Calu3 (cell line): ENCODE measurements at regions of chr9 and their contacts with region 1.

Region 1: GRCh38 chr9:18359335-18359734 is 114.6 kb upstream of the ADAMTSL1 start:
- DNase-seq: no peak
- H3K4me3 Mint-ChIP-seq: no peak overlapping the region
- H3K27ac Mint-ChIP-seq: no peak overlapping the region
- H3K4me1 Mint-ChIP-seq: no peaks in the 10 kb centered on the region
- H3K27me3 Mint-ChIP-seq: no peaks in the 10 kb centered on the region
- CTCF ChIP-seq: no peak

Region 2: DNA sequence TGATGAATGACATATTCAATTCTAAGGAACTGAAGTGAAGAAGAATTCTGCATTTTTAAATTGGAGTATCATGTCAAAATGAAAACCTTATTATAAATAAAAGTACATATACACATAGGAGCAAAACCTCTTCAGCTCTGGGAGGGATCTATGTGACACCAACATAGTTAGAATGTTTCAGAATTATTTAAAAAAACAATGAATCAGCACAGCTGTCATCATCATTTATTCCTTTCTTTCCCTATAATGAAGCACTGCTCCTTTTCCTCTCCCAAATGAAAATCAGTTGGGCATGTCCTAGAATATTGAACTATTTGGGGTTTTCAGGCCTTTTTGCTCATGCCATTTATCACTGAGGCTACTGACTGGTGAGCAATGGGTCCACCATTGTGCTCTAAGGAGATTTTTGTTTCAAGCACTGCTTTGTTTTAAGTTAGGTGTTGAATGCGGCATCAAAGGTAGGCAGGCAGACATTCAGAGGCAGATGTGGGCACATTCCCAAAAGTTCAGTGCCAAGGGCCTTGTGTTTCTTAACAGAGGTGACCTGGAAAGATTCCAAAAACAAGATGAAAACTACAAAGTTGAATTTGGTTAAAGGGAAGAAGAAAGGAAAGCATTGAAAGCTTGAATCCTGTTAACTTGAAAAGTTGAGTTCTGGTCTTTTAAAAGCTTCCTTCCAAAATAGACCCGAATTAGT is 11.8 kb before region 1 on chr9:
- CTCF ChIA-PET with region 1: interaction called, 11 read pairs
- intact Hi-C with region 1: no loop called
- DNase-seq: no peak
- H3K4me3 Mint-ChIP-seq: no peak overlapping the region
- H3K27ac Mint-ChIP-seq: no peak overlapping the region
- H3K4me1 Mint-ChIP-seq: peaks cover 21% of the 10 kb centered on the region
- H3K27me3 Mint-ChIP-seq: no peaks in the 10 kb centered on the region
- CTCF ChIP-seq: no peak

Region 3: GRCh38 chr9:18442629-18443491 is 83.5 kb after region 1 on chr9:
- CTCF ChIA-PET with region 1: no interaction called
- intact Hi-C with region 1: no loop called
- DNase-seq: peak; percentile 66
- H3K4me3 Mint-ChIP-seq: no peak overlapping the region
- H3K27ac Mint-ChIP-seq: no peak overlapping the region
- H3K4me1 Mint-ChIP-seq: peaks cover 12% of the 10 kb centered on the region
- H3K27me3 Mint-ChIP-seq: no peaks in the 10 kb centered on the region
- CTCF ChIP-seq: peak; percentile 61

Region 4: GRCh38 chr9:18520416-18521047 is 161.2 kb after region 1 on chr9:
- CTCF ChIA-PET with region 1: no interaction called
- intact Hi-C with region 1: no loop called
- DNase-seq: no peak
- H3K4me3 Mint-ChIP-seq: no peak overlapping the region
- H3K27ac Mint-ChIP-seq: no peak overlapping the region
- H3K4me1 Mint-ChIP-seq: no peaks in the 10 kb centered on the region
- H3K27me3 Mint-ChIP-seq: peaks cover under 1% of the 10 kb centered on the region
- CTCF ChIP-seq: no peak